GM10248 (cell line): ENCODE measurements at regions of chr1 and their contacts with region 1.

Region 1: DNA sequence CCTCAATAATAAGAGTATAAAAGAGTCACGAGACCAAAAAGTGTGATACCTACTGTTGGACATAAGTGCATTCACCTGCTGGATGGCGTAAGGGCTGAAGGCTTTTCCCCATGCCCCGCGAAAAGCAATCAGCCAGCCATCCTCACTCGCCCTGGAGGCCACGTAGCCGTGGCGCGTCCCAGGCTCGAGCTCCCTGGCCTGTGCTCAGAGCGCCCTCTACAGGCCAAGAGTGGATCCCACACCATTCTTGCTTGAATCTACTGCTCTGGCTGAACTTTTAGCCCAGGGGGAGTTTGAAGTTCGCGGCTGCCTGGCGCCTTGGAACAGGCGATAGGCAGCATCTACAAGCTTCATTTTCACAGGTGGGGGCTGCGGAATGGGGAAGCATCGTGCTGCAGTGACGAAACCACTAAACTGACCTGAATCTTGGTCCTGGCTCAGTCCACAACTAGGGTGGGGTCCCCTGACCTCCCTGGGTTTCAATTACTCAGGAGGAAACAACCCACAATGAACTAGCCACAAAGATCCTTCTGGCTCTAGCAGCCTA is 70.3 kb upstream of the SERBP1 start:
- DNase-seq: peak; percentile 93
- CTCF ChIP-seq: peak; percentile 98

Region 2: DNA sequence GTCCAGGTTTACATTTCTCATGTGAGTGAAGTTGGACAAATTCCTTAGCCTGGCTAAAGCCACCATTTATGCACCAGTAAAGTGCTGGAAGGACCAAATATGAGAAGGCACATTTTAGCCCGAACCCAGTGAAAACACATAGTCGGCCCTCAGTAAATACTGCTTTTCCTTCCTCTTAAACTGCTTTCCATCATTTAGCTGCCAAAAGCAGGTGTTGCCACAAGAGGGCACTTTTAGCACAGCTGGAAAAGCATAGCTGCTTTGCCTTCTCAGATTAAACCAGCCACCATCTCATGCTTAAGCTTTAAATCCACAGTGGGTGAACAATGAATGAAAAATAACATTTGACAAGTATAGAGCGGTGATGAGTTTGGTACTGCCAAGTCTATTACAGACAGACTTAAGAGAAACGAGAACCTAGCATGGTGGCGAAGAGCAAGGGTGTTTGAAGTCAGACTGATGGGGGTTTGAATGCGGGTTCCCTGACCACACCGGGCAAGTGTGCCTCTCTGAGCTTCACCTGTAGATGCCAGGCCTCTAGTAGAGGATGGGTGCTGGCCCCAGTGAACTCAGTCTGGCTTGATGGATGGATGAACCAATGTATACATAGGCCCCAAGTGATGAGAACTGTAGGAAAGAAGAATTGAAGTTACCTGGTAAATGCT is 504.3 kb before region 1 on chr1:
- CTCF ChIA-PET with region 1: interaction called, 22 read pairs
- POLR2A ChIA-PET with region 1: no interaction called
- DNase-seq: peak; percentile 58
- CTCF ChIP-seq: peak; percentile 88

Region 3: DNA sequence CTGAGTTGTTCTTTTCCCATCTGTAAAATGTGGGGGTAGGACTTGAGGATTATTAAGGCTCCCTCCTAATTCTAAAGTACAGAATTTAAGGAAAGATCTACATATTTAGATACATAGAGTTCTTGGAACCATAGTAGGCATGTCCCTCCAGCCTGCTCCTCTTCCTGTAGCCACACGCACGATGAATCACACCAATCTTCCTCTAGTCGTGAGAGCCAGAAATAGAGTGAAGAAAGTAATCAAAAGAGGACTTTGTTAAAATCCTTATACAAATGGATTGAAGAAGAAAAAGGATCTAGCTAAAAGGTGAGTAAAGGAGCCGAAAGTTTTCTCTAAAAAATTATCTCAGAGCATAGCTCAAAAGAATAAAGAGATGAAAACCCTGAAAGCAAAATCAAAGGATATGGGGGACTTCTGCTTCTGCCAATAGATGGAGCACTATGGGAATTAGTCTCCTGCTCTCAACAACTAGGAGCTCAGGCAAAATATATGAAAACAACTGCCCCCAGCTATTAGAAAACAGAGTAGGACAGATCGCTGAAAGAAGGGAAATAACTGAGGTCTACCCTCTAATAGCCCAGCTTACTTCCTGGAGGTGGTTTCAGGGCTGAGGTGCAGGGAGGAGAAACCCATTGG is 374.3 kb before region 1 on chr1:
- CTCF ChIA-PET with region 1: no interaction called
- POLR2A ChIA-PET with region 1: no interaction called
- DNase-seq: no peak
- CTCF ChIP-seq: no peak

Region 4: GRCh38 chr1:67227196-67227595 is 273.3 kb before region 1 on chr1:
- CTCF ChIA-PET with region 1: interaction called, 15 read pairs
- POLR2A ChIA-PET with region 1: no interaction called
- DNase-seq: no peak
- CTCF ChIP-seq: no peak

Region 5: GRCh38 chr1:67339623-67340343 is 160.7 kb before region 1 on chr1:
- CTCF ChIA-PET with region 1: interaction called, 10 read pairs
- POLR2A ChIA-PET with region 1: no interaction called
- DNase-seq: no peak
- CTCF ChIP-seq: no peak

Region 6: GRCh38 chr1:67430352-67431155 is 69.9 kb before region 1 on chr1 and contains the start of gene SERBP1:
- CTCF ChIA-PET with region 1: interaction called, 23 read pairs
- POLR2A ChIA-PET with region 1: no interaction called
- DNase-seq: peak; percentile 95
- CTCF ChIP-seq: no peak

Region 7: DNA sequence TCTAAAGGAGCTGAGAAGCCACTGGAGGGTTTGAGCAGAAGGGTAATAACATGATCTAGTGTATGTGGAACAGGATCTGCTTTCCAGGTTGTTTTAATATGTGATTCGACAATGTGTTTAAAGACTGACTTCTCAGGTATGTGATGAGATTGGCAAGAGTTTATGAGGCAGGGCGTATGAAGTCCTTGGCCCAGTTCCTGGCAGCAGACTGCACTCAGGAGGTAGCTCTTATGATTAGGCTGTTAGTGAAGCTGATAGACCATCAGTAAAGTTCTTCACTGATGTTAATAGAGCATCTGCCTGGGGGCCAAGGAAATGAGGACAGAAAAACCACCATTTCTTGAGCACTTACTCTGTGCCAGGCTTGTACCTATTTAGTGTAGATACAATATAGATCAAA is 28.4 kb before region 1 on chr1:
- CTCF ChIA-PET with region 1: interaction called, 11 read pairs
- POLR2A ChIA-PET with region 1: no interaction called
- DNase-seq: no peak
- CTCF ChIP-seq: no peak

Region 8: GRCh38 chr1:67515324-67516080 is 15.0 kb after region 1 on chr1:
- CTCF ChIA-PET with region 1: interaction called, 39 read pairs
- POLR2A ChIA-PET with region 1: no interaction called
- DNase-seq: no peak
- CTCF ChIP-seq: no peak